Naive thymus-derived CD4-positive, alpha-beta T cell (primary cell): ENCODE measurements at regions of chr1 and their contacts with region 1.

Region 1: GRCh38 chr1:179706339-179706941 is 36.7 kb upstream of the FAM163A start:
- DNase-seq: peak; percentile 27 to 78 (median 68)
- ATAC-seq: peak; percentile 33
- H3K4me3 ChIP-seq: no peak overlapping the region
- H3K4me3 Mint-ChIP-seq: no peak overlapping the region
- H3K27ac ChIP-seq: no peak overlapping the region
- H3K27ac Mint-ChIP-seq: peak overlapping the region in 6 of 9 donors; percentile 13 to 87 (median 72)
- H3K4me1 ChIP-seq: peaks cover 0 to 15% of the 10 kb centered on the region in 2 donors
- H3K4me1 Mint-ChIP-seq: peaks cover 6 to 25% (median 14%) of the 10 kb centered on the region in 7 donors
- H3K27me3 ChIP-seq: no peaks in the 10 kb centered on the region
- H3K27me3 Mint-ChIP-seq: peaks cover 0 to 6% (median 0%) of the 10 kb centered on the region in 5 donors

Region 2: GRCh38 chr1:180027949-180028445 is 321.6 kb after region 1 on chr1:
- CTCF ChIA-PET with region 1: no interaction called
- POLR2A ChIA-PET with region 1: no interaction called
- intact Hi-C with region 1: loop called in 1 of 2 experiments (anchors 1 kb)
- DNase-seq: no peak
- ATAC-seq: no peak
- H3K4me3 ChIP-seq: no peak overlapping the region
- H3K4me3 Mint-ChIP-seq: no peak overlapping the region
- H3K27ac ChIP-seq: no peak overlapping the region
- H3K27ac Mint-ChIP-seq: no peak overlapping the region
- H3K4me1 ChIP-seq: no peaks in the 10 kb centered on the region
- H3K4me1 Mint-ChIP-seq: peaks cover 0 to 13% (median 0%) of the 10 kb centered on the region in 7 donors
- H3K27me3 ChIP-seq: no peaks in the 10 kb centered on the region
- H3K27me3 Mint-ChIP-seq: no peaks in the 10 kb centered on the region

Region 3: DNA sequence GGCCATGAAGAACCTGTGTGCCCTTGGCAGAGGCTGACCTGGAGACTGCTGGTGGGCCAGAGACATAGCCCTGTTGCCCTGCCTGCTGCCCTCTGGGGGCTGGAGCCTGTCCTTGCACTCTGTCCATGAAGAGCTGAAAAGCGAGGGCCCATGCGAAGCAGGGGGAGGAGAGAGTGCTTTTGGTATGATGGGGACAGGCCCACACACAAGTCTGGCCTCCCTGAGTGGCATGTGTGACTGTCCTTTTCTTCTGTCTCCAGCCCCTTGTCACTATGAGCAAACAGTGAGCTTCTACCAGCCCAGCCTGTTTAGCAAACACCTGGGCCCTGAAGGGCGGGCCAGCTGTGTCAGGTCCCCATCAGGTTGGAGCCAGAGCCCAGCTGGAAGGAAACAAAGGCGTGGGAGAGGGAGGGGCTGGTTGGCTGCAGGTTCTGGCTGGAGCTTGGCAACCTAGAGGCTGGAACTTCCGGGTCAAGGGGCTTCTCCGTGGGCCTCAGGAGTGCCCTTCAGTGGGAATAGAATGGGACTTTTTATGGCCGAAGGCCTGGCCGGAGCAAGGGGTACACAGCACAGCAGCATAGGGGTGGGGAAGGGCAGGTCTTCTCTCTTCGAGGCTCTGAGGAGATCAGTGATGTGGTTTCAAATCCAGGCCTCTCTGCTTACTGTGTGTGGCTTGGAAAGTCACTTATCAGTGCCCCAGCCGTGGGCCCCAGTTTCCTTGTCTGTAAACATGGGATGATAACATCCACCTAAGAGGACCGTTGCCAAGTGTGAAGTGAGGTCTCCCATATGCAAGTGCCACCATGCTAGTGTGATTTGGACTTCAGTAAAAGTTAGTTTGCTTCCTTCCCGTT is 462.6 kb after region 1 on chr1:
- CTCF ChIA-PET with region 1: no interaction called
- POLR2A ChIA-PET with region 1: no interaction called
- intact Hi-C with region 1: loop called in 1 of 2 experiments (anchors 1 kb)
- DNase-seq: peak in 2 of 9 donors; percentile 16 to 27
- ATAC-seq: peak; percentile 83
- H3K4me3 ChIP-seq: no peak overlapping the region
- H3K4me3 Mint-ChIP-seq: no peak overlapping the region
- H3K27ac ChIP-seq: no peak overlapping the region
- H3K27ac Mint-ChIP-seq: peak overlapping the region in 2 of 9 donors; percentile 17 to 28
- H3K4me1 ChIP-seq: no peaks in the 10 kb centered on the region
- H3K4me1 Mint-ChIP-seq: peaks cover 0 to 13% (median 4%) of the 10 kb centered on the region in 7 donors
- H3K27me3 ChIP-seq: no peaks in the 10 kb centered on the region
- H3K27me3 Mint-ChIP-seq: no peaks in the 10 kb centered on the region